ENCODE measurements at regions of chr5 and their contacts with region 1.

Region 1: DNA sequence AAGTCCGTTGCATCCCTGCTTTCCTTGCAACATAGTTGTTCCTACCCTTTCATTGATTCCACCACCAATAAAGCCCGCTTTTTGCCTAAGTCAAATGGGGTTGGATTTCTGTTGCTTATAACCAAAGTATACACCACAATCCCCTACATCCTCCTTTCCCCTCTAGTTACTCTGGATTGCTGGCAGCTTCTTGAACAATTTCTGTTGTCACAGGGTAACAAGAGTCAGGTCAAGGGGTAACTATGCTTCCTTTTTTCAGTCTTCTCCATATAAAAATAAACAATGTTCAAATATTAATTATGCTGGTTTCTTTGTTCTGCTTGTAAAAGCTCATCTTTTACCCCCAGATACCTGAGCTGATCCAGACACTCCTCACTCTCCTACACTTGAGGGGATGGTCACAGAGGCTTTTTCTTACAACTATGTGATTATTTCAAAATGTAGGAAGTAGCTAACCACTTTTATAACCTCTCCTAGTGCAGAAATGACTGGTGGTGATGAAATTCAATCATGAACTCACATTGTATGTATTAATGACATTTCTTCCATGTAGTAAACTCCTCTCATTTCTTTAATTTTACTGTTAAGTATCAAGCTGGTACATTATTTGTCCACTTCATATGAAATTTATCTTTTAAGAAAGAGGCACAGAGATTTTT is 136.5 kb downstream of the SNX18 start:
- DNase-seq: no peak
- H3K4me3 ChIP-seq: no peak overlapping the region
- H3K27me3 ChIP-seq: no peaks in the 10 kb centered on the region
- CTCF ChIP-seq: no peak

Region 2: GRCh38 chr5:54867310-54867944 is 213.3 kb after region 1 on chr5:
- CTCF ChIA-PET with region 1: no interaction called
- POLR2A ChIA-PET with region 1: no interaction called
- DNase-seq: no peak
- H3K4me3 ChIP-seq: no peak overlapping the region
- H3K27me3 ChIP-seq: peaks cover 2% of the 10 kb centered on the region; the same call in 1 of the 2 replicates
- CTCF ChIP-seq: peak; percentile 55

Region 3: GRCh38 chr5:55306641-55307382 is 652.7 kb after region 1 on chr5:
- CTCF ChIA-PET with region 1: no interaction called
- POLR2A ChIA-PET with region 1: interaction called, 15 read pairs
- DNase-seq: no peak
- H3K4me3 ChIP-seq: peak overlapping the region; percentile 73
- H3K27me3 ChIP-seq: no peaks in the 10 kb centered on the region
- CTCF ChIP-seq: no peak

Measured in BJ (cell line).